Ascending aorta (tissue), 2 donors: ENCODE measurements at regions of chr9 and their contacts with region 1.

Region 1: DNA sequence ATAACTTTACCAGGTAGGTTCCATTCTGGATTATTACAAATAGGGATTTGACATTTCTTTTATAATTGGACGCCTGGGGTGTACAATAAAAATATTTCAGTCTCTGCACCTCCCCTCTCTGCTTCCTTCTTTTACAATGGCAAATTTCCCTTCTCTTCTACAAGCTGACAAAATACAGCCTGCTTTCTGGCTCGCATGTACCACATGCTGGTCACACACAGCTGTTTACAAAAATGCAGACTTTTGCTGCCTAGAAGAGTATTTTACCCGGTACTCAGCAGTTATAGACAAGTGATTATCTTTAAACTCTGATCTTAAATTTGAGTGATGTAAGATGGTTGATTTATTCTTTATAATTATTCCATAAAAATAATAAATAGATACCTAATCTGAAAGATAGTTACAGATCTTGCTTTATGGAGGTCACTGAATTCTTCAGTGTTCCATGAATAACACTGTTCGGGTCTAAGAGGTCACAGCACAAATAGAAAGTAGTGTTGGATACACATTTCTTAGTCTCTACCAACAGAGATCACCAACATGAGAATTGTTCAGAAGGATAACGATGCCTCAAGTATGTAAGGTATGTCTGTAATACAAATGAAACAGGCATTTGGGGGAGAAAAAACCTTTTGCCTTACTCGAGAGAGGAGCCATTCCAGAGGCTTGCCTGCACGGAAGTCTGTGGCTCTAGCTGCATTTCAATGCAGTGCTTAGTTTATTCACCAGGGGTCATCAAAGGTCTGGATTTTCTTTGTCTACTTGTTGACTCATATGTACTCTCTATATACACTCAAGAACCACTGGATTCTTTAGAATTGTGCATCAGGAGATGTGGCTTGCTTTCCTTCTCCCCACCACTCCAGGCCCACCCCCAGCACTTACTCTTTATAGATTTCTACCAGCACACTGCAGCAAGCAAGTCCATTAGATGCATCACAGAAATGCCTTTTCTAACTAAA is 206.6 kb upstream of the RFX3 start:
- DNase-seq: no peak
- H3K4me3 ChIP-seq: peak overlapping the region in 1 of 2 donors; percentile 38
- H3K27ac ChIP-seq: peak overlapping the region; percentile 22 to 38
- H3K4me1 ChIP-seq: peaks cover 0 to 3% of the 10 kb centered on the region in 2 donors
- H3K27me3 ChIP-seq: no peaks in the 10 kb centered on the region
- CTCF ChIP-seq: peak; percentile 58 to 72 (median 68)

Region 2: DNA sequence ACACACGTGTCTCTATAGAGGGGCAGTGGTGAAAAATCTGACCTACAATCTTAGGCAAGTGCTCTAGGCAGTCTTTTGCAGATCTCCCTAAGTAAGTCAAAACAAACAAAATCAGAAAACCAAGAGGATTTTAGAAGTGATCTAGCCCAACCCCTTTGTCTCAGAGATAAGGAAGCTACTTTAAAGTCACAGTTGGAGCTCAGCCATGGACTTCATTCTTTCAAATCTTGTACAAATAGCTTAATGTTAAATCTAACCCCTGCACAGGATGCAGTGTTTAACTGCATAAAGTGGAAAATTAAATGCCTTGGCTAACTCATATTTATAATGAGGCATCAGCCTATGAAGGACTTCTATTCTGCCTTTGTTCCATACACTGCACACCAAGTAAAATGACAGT is 71.4 kb before region 1 on chr9:
- intact Hi-C with region 1: no loop called
- DNase-seq: no peak
- H3K4me3 ChIP-seq: no peak overlapping the region
- H3K27ac ChIP-seq: no peak overlapping the region
- H3K4me1 ChIP-seq: no peaks in the 10 kb centered on the region
- H3K27me3 ChIP-seq: no peaks in the 10 kb centered on the region
- CTCF ChIP-seq: no peak

Region 3: DNA sequence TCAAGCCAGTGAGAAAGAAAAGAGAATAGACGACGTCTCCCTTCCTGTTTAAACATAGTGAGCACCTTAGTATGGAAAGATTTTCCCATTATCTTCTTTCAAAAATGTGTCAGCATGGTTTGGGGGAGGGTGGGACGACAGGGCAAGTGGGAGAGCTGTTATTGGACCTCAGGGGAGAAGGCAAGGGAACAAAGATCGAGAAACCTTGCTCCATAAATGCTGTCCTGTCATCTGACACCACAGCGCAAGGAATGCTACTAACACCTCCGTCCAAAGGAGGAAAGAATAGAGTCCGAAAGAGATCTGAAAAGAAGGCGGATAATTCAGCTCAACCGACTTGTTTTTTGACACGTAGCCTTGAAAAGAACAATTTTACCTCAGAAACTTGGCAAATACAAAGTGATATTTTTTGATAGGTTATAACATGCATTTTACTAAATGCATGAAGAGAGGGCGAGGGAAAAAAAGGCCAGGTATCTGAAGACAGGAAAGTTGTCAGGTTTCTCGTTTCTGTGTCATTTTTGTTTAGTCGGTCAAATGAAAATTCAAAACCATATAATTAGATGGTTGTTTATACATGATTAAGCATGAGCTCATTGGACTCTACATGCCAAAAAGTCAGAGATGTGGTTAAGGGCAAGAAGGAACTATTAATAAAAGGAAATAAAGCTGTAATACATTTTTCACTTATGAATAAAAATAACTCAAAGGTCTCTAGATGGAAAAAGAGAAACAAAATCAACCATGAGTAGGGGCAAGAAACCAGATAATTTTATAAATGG is 411.8 kb after region 1 on chr9:
- intact Hi-C with region 1: loop called (anchors 10 kb)
- DNase-seq: no peak
- H3K4me3 ChIP-seq: peak overlapping the region; percentile 10 to 49
- H3K27ac ChIP-seq: peak overlapping the region; percentile 75 to 78
- H3K4me1 ChIP-seq: peaks cover 5 to 7% of the 10 kb centered on the region in 2 donors
- H3K27me3 ChIP-seq: no peaks in the 10 kb centered on the region
- CTCF ChIP-seq: no peak

Region 4: GRCh38 chr9:4228606-4229005 is 496.2 kb after region 1 on chr9:
- intact Hi-C with region 1: loop called (anchors 5 kb)
- DNase-seq: no peak
- H3K4me3 ChIP-seq: no peak overlapping the region
- H3K27ac ChIP-seq: no peak overlapping the region
- H3K4me1 ChIP-seq: no peaks in the 10 kb centered on the region
- H3K27me3 ChIP-seq: no peaks in the 10 kb centered on the region
- CTCF ChIP-seq: peak in 2 of 3 experiments; percentile 33 to 59

Region 5: DNA sequence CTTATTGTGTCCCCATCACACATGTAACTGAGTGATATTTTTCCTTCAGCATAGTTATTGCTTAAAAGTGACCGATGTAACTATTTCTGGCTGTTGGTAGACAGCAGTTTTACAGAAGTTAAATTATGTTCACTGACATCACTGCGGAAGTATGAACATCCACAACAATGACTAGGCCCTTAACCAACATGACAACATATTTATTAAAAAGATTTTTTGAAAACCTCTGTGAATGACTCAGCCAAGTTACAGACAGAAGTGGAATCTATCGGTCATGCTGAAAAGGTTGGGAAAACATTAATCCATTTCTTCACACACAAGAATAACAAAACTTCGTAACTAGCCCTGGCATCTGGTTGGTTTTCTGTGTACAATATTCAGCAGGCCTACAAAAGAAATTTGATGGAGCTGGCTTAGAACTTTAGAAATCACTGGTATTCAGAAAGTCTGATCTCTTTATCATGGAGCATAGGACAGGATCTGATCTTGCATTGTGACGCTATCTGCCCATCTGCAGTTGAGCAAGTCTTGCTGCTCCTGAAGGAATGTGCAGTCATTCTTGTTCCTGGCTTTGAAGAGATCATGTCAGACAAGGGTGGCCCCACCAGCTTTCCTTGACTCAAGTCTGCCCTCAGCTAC is 561.1 kb after region 1 on chr9:
- intact Hi-C with region 1: no loop called
- DNase-seq: peak in 1 of 2 donors; percentile 71
- H3K4me3 ChIP-seq: no peak overlapping the region
- H3K27ac ChIP-seq: peak overlapping the region; percentile 83 to 87
- H3K4me1 ChIP-seq: peaks cover 12 to 31% of the 10 kb centered on the region in 2 donors
- H3K27me3 ChIP-seq: no peaks in the 10 kb centered on the region
- CTCF ChIP-seq: no peak

Region 6: GRCh38 chr9:4339357-4339756 is 607.0 kb after region 1 on chr9:
- intact Hi-C with region 1: loop called (anchors 1 kb)
- DNase-seq: peak; percentile 18 to 91
- H3K4me3 ChIP-seq: no peak overlapping the region
- H3K27ac ChIP-seq: no peak overlapping the region
- H3K4me1 ChIP-seq: no peaks in the 10 kb centered on the region
- H3K27me3 ChIP-seq: no peaks in the 10 kb centered on the region
- CTCF ChIP-seq: peak; percentile 74 to 87 (median 86)

Region 7: DNA sequence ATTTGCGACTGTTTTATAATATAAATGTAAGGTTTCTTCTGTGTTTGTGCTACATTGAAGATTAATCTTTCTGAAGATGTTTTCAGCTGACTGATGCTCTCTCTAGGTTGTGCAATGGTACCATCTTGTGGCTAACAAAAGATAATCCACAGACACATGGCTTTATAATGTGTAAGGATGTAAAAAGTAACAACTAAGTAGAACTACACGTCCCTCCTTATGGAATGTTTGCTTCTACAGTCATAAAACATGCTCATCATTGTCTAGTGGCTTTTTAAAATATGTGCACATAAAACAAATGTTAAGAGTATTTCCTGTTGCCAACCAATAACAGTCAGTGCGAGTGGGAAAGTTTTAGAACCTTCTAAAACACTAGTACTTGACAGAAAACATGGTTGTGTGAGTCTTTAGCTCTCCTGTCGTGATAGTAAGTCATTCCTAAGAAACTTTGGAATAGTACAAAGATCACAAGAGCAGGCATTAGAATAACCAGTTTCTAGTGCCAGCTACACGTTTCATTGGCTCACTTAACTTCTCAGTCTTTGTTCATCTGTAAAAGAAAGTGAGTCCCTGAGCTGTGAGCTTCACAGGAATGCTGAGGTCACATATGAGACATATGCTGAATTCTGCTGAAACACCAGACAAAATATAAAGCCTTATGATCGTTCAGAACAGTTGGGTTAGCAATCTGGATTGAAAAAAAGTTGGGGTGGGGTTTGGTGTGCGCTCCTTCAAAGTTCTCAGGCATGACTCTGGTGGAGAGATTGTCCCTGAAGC is 643.3 kb after region 1 on chr9:
- intact Hi-C with region 1: loop called (anchors 1 kb)
- DNase-seq: no peak
- H3K4me3 ChIP-seq: no peak overlapping the region
- H3K27ac ChIP-seq: no peak overlapping the region
- H3K4me1 ChIP-seq: no peaks in the 10 kb centered on the region
- H3K27me3 ChIP-seq: no peaks in the 10 kb centered on the region
- CTCF ChIP-seq: peak; percentile 15 to 51 (median 24)